Panc1 (cell line): ENCODE measurements at regions of chr3 and their contacts with region 1.

Region 1: GRCh38 chr3:172750368-172751174 is at the start of gene ECT2:
- DNase-seq: peak; percentile 99
- ATAC-seq: peak; percentile 99
- H3K4me3 ChIP-seq: peak within 1 kb of the TSS; percentile 90 to 96
- H3K27ac ChIP-seq: peak within 1 kb of the TSS; percentile 99
- H3K4me1 ChIP-seq: peaks cover 41% of the 10 kb centered on the region
- H3K27me3 ChIP-seq: no peaks in the 10 kb centered on the region
- CTCF ChIP-seq: peak; percentile 93
- total RNA-seq, gene ECT2: 102 TPM

Region 2: DNA sequence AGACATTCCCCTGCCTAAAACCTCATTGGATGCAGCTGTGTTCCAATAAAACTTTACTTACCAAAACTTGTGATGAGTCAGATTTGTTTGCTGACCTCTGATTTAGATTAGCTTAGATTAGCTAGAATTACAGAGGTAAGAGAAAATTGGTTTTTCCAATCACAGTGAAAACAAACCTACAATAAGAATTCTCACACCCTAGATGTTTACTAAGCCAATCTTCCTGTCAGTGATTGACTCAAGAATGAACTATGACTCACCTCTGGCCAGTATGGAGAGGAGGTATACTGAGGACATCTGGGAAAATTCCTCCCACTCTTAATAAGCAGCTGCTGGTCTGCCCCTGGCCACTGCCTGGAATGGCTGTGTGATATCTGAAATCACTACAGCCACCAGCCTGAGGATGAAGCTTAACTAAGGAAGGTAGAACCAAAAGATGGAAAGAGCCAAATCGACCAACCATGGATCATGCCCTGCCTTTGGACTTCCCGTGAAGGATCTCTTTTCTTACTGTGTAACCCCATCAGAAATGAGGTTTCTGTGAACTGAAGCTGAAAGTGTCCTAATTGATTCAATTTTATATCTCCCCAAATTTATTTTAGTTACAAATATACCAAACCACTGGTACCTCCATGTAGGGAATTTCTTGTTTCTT is 283.3 kb before region 1 on chr3:
- CTCF ChIA-PET with region 1: no interaction called
- POLR2A ChIA-PET with region 1: interaction called, 15 read pairs
- in situ Hi-C with region 1: no loop called
- intact Hi-C with region 1: no loop called
- DNase-seq: no peak
- ATAC-seq: peak; percentile 69; the same call in 1 of the 2 replicates
- H3K4me3 ChIP-seq: no peak overlapping the region
- H3K27ac ChIP-seq: no peak overlapping the region
- H3K4me1 ChIP-seq: peaks cover 9% of the 10 kb centered on the region
- H3K27me3 ChIP-seq: peaks cover 7% of the 10 kb centered on the region; the same call in 1 of the 2 replicates
- CTCF ChIP-seq: no peak

Region 3: GRCh38 chr3:172673210-172673679 is 77.3 kb before region 1 on chr3:
- CTCF ChIA-PET with region 1: interaction called, 20 read pairs
- POLR2A ChIA-PET with region 1: interaction called, 4 read pairs
- in situ Hi-C with region 1: no loop called
- intact Hi-C with region 1: loop called (anchors 1 kb)
- DNase-seq: peak; percentile 68
- ATAC-seq: peak; percentile 93
- H3K4me3 ChIP-seq: no peak overlapping the region
- H3K27ac ChIP-seq: peak overlapping the region; percentile 79
- H3K4me1 ChIP-seq: peaks cover 27% of the 10 kb centered on the region
- H3K27me3 ChIP-seq: no peaks in the 10 kb centered on the region
- CTCF ChIP-seq: peak; percentile 95

Region 4: GRCh38 chr3:172776049-172776717 is 25.6 kb after region 1 on chr3:
- CTCF ChIA-PET with region 1: no interaction called
- POLR2A ChIA-PET with region 1: interaction called, 11 read pairs
- in situ Hi-C with region 1: no loop called
- intact Hi-C with region 1: no loop called
- DNase-seq: no peak
- ATAC-seq: no peak
- H3K4me3 ChIP-seq: no peak overlapping the region
- H3K27ac ChIP-seq: no peak overlapping the region
- H3K4me1 ChIP-seq: no peaks in the 10 kb centered on the region
- H3K27me3 ChIP-seq: no peaks in the 10 kb centered on the region
- CTCF ChIP-seq: no peak